Thyroid gland (tissue), 4 donors: ENCODE measurements at regions of chr11 and their contacts with region 1.

Region 1: GRCh38 chr11:120229451-120230424 is 10.2 kb upstream of the POU2F3 start:
- DNase-seq: no peak
- H3K4me3 ChIP-seq: no peak overlapping the region
- H3K27ac ChIP-seq: no peak overlapping the region
- H3K4me1 ChIP-seq: peaks cover 0 to 9% of the 10 kb centered on the region in 2 donors
- H3K27me3 ChIP-seq: no peaks in the 10 kb centered on the region
- CTCF ChIP-seq: peak; percentile 20 to 77 (median 56)
- POLR2A ChIP-seq: no peak

Region 2: DNA sequence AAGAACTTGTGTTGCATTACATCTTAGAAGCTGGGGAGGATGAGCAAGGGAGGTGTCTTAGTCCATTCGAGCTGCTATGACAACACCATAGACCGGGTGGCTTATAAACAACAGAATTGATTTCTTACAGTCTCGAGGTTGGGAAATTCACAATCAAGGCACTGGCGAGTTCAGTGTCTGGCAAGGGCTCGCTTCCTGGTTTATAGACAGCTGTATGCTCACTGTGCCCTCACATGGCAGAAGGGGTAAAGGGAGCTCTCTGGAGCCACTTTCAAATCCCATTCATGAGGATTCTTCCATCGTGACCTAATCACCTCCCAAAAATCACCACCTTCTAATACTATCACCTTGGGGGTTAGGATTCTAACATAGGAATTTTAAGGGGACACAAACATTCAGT is 350.7 kb before region 1 on chr11:
- intact Hi-C with region 1: no loop called
- DNase-seq: no peak
- H3K4me3 ChIP-seq: no peak overlapping the region
- H3K27ac ChIP-seq: no peak overlapping the region
- H3K4me1 ChIP-seq: no peaks in the 10 kb centered on the region
- H3K27me3 ChIP-seq: no peaks in the 10 kb centered on the region
- CTCF ChIP-seq: no peak
- POLR2A ChIP-seq: no peak

Region 3: DNA sequence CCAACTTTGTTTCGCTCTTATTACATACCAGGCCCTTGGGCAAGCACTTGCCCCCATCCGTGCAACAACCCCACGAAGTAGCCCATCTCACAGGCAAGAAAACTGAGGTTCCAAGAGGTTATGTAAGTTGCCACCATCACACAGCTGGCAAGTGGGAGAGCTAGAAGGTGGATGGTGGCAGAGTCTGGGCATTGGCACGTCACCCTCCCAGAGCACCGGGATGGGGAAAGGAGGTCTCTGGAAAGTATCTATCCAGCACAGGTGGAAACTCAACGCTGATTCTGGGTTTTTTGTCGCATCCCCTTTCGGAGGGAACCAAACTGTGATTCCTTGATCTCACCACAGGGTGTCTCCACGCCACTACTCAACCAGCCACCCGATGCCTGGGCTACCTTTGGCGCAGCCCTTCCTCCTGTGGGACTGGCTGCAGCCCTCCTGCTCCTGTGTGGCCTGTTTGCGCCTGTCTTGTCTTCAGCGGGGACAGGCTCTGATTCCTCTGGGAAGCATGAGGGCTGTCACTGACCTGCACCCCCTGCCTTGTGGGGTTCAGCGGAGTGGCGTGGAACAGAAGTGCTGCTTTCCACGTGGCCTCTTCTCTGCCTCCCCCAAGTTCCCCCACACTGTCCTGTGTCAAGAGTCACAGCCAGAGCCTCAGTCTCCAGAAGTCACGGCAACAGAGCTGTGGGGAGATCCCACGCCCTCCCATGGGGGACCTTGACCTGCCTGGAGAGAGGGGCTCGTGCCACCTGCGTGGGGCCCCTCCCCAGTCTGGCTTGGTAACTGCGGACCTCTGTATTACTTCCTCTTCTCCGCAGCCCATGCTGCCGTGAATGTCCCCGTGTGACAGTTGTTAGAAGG is 57.5 kb before region 1 on chr11:
- intact Hi-C with region 1: loop called (anchors 5 kb)
- DNase-seq: peak; percentile 56 to 68
- H3K4me3 ChIP-seq: no peak overlapping the region
- H3K27ac ChIP-seq: no peak overlapping the region
- H3K4me1 ChIP-seq: peaks cover 0 to 13% of the 10 kb centered on the region in 2 donors
- H3K27me3 ChIP-seq: no peaks in the 10 kb centered on the region
- CTCF ChIP-seq: peak; percentile 58 to 83 (median 73)
- POLR2A ChIP-seq: no peak